ENCODE measurements at regions of chr20 and their contacts with region 1.

Region 1: GRCh38 chr20:47438577-47439381 is 62.9 kb upstream of the NCOA3 start:
- DNase-seq: peak; percentile 30
- ATAC-seq: peak; percentile 68
- H3K4me3 Mint-ChIP-seq: peak overlapping the region; percentile 42
- H3K27ac Mint-ChIP-seq: peak overlapping the region; percentile 91
- H3K4me1 Mint-ChIP-seq: peaks cover 52% of the 10 kb centered on the region
- H3K27me3 Mint-ChIP-seq: no peaks in the 10 kb centered on the region
- CTCF ChIP-seq: no peak

Region 2: GRCh38 chr20:47099825-47100441 is 338.8 kb before region 1 on chr20:
- CTCF ChIA-PET with region 1: no interaction called
- POLR2A ChIA-PET with region 1: no interaction called
- intact Hi-C with region 1: no loop called
- DNase-seq: no peak
- ATAC-seq: no peak
- H3K4me3 Mint-ChIP-seq: no peak overlapping the region
- H3K27ac Mint-ChIP-seq: no peak overlapping the region
- H3K4me1 Mint-ChIP-seq: no peaks in the 10 kb centered on the region
- H3K27me3 Mint-ChIP-seq: peaks cover 10% of the 10 kb centered on the region
- CTCF ChIP-seq: no peak

Region 3: GRCh38 chr20:47392015-47392720 is 46.6 kb before region 1 on chr20:
- CTCF ChIA-PET with region 1: no interaction called
- POLR2A ChIA-PET with region 1: interaction called, 7 read pairs
- intact Hi-C with region 1: loop called (anchors 2 kb)
- DNase-seq: no peak
- ATAC-seq: peak; percentile 74
- H3K4me3 Mint-ChIP-seq: peak overlapping the region; percentile 55
- H3K27ac Mint-ChIP-seq: peak overlapping the region; percentile 95
- H3K4me1 Mint-ChIP-seq: peaks cover 47% of the 10 kb centered on the region
- H3K27me3 Mint-ChIP-seq: no peaks in the 10 kb centered on the region
- CTCF ChIP-seq: no peak

Region 4: GRCh38 chr20:47453142-47453782 is 14.5 kb after region 1 on chr20:
- CTCF ChIA-PET with region 1: interaction called, 4 read pairs
- POLR2A ChIA-PET with region 1: interaction called, 19 read pairs
- intact Hi-C with region 1: loop called (anchors 1 kb)
- DNase-seq: no peak
- ATAC-seq: peak; percentile 78
- H3K4me3 Mint-ChIP-seq: peak overlapping the region; percentile 49
- H3K27ac Mint-ChIP-seq: peak overlapping the region; percentile 80
- H3K4me1 Mint-ChIP-seq: peaks cover 55% of the 10 kb centered on the region
- H3K27me3 Mint-ChIP-seq: no peaks in the 10 kb centered on the region
- CTCF ChIP-seq: no peak

Region 5: GRCh38 chr20:47487175-47487917 is 48.6 kb after region 1 on chr20:
- CTCF ChIA-PET with region 1: interaction called, 3 read pairs
- POLR2A ChIA-PET with region 1: interaction called, 11 read pairs
- intact Hi-C with region 1: loop called (anchors 1 kb)
- DNase-seq: peak; percentile 42
- ATAC-seq: peak; percentile 77
- H3K4me3 Mint-ChIP-seq: peak overlapping the region; percentile 72
- H3K27ac Mint-ChIP-seq: peak overlapping the region; percentile 97
- H3K4me1 Mint-ChIP-seq: peaks cover 79% of the 10 kb centered on the region
- H3K27me3 Mint-ChIP-seq: no peaks in the 10 kb centered on the region
- CTCF ChIP-seq: no peak

Region 6: GRCh38 chr20:47663333-47664067 is 224.7 kb after region 1 on chr20:
- CTCF ChIA-PET with region 1: no interaction called
- POLR2A ChIA-PET with region 1: no interaction called
- intact Hi-C with region 1: no loop called
- DNase-seq: peak; percentile 69
- ATAC-seq: peak; percentile 88
- H3K4me3 Mint-ChIP-seq: no peak overlapping the region
- H3K27ac Mint-ChIP-seq: no peak overlapping the region
- H3K4me1 Mint-ChIP-seq: peaks cover 4% of the 10 kb centered on the region
- H3K27me3 Mint-ChIP-seq: no peaks in the 10 kb centered on the region
- CTCF ChIP-seq: peak; percentile 75